ENCODE measurements at regions of chr5 and their contacts with region 1.

Region 1: GRCh38 chr5:53069626-53070025 is 39.9 kb downstream of the MOCS2 start:
- DNase-seq: peak; percentile 85
- ATAC-seq: peak; percentile 97
- H3K4me3 Mint-ChIP-seq: no peak overlapping the region
- H3K27ac Mint-ChIP-seq: peak overlapping the region; percentile 24
- H3K4me1 Mint-ChIP-seq: peaks cover 18% of the 10 kb centered on the region
- H3K27me3 Mint-ChIP-seq: peaks cover 12% of the 10 kb centered on the region

Region 2: GRCh38 chr5:53008751-53009150 is 60.9 kb before region 1 on chr5:
- CTCF ChIA-PET with region 1: no interaction called
- POLR2A ChIA-PET with region 1: no interaction called
- intact Hi-C with region 1: loop called (anchors 1 kb)
- DNase-seq: peak; percentile 65
- ATAC-seq: peak; percentile 92
- H3K4me3 Mint-ChIP-seq: no peak overlapping the region
- H3K27ac Mint-ChIP-seq: peak overlapping the region; percentile 39
- H3K4me1 Mint-ChIP-seq: peaks cover 53% of the 10 kb centered on the region
- H3K27me3 Mint-ChIP-seq: peaks cover 10% of the 10 kb centered on the region

Region 3: DNA sequence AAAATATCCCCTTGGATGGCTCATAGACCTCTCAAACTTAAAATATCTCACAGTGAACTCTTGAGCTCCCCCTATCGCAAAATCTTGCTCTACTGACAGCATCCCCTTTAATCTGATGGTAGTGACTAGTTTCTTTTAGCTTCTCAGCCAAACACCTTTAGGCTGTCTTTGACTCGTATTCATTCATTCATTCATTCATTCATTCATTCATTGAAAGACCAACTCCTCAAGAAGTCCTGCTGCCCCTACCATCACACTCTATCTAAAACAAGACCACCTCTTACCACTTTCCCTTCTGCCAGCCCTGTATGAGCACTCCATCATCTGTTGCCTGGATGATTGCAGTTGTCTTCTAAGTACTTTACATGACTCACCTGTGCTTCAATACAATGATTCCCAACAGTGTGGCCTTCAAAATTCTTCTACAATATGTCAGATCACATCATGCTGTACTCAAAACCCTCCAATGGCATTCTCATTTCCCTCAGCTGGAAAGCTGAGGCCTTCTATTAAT is 33.7 kb before region 1 on chr5:
- CTCF ChIA-PET with region 1: interaction called, 11 read pairs
- POLR2A ChIA-PET with region 1: no interaction called
- intact Hi-C with region 1: loop called (anchors 1 kb)
- DNase-seq: peak; percentile 20
- ATAC-seq: no peak
- H3K4me3 Mint-ChIP-seq: no peak overlapping the region
- H3K27ac Mint-ChIP-seq: no peak overlapping the region
- H3K4me1 Mint-ChIP-seq: peaks cover 33% of the 10 kb centered on the region
- H3K27me3 Mint-ChIP-seq: peaks cover 6% of the 10 kb centered on the region

Region 4: GRCh38 chr5:53041071-53041692 is 28.4 kb before region 1 on chr5:
- CTCF ChIA-PET with region 1: interaction called, 3 read pairs
- POLR2A ChIA-PET with region 1: no interaction called
- intact Hi-C with region 1: loop called (anchors 1 kb)
- DNase-seq: peak; percentile 43
- ATAC-seq: peak; percentile 93
- H3K4me3 Mint-ChIP-seq: no peak overlapping the region
- H3K27ac Mint-ChIP-seq: peak overlapping the region; percentile 48
- H3K4me1 Mint-ChIP-seq: peaks cover 37% of the 10 kb centered on the region
- H3K27me3 Mint-ChIP-seq: peaks cover 16% of the 10 kb centered on the region

Region 5: GRCh38 chr5:53055359-53055758 is 14.3 kb before region 1 on chr5:
- CTCF ChIA-PET with region 1: interaction called, 12 read pairs
- POLR2A ChIA-PET with region 1: no interaction called
- intact Hi-C with region 1: no loop called
- DNase-seq: no peak
- ATAC-seq: no peak
- H3K4me3 Mint-ChIP-seq: no peak overlapping the region
- H3K27ac Mint-ChIP-seq: no peak overlapping the region
- H3K4me1 Mint-ChIP-seq: no peaks in the 10 kb centered on the region
- H3K27me3 Mint-ChIP-seq: peaks cover 17% of the 10 kb centered on the region

Region 6: DNA sequence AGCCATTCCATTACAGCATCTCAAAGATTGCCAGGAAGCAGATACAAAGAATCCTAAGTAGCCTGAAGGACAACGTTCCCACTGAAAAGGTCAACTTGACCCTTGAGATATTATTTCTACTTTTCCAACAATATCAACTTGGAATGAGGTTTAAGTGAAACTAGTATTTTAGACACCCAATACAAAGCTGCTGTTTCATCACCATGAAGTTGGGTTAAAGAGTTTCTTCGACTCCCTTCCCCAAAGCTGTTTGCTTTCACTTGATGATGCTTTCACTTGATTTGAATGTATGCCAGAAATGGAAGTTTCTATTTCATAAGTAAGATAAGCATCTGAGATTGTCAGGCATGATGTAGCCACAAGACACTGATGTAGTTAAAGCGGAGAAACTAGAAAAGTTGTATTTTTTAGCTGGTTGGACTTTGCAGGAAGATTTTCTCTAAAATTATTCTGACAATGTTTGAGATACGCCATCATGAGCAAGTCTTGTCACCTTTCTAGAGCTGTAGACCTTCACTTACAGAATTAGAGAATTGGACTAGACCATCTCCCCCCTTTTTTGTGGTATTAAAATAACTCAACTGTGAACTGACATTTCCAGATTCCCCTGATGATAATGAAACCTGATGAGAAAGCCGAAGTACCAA is 19.8 kb after region 1 on chr5:
- CTCF ChIA-PET with region 1: interaction called, 33 read pairs
- POLR2A ChIA-PET with region 1: interaction called, 3 read pairs
- intact Hi-C with region 1: loop called (anchors 1 kb)
- DNase-seq: no peak
- ATAC-seq: peak; percentile 86
- H3K4me3 Mint-ChIP-seq: peak overlapping the region; percentile 60
- H3K27ac Mint-ChIP-seq: peak overlapping the region; percentile 83
- H3K4me1 Mint-ChIP-seq: peaks cover 30% of the 10 kb centered on the region
- H3K27me3 Mint-ChIP-seq: peaks cover 2% of the 10 kb centered on the region

Region 7: DNA sequence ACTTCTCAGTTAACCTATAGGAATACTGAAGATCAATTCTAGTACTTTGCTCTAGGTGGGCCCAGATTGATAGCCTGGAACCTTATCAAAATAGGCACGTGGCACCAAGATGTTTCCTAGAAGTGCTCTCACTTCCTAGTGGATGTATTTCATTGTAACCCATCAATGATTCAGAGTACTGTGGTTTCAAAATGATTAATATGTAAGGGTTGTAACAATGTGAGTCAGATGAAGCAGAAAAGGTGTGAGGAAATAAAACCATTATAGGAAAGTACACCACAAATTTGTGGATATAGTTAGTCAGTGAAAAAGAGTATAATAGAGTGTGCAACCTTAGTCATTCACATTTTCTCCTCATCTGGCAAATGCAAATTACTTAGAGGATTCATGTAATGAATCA is 233.5 kb after region 1 on chr5:
- CTCF ChIA-PET with region 1: no interaction called
- POLR2A ChIA-PET with region 1: no interaction called
- intact Hi-C with region 1: loop called in 1 of 2 experiments (anchors 1 kb)
- DNase-seq: peak; percentile 14
- ATAC-seq: peak; percentile 93
- H3K4me3 Mint-ChIP-seq: no peak overlapping the region
- H3K27ac Mint-ChIP-seq: peak overlapping the region; percentile 33
- H3K4me1 Mint-ChIP-seq: peaks cover 20% of the 10 kb centered on the region
- H3K27me3 Mint-ChIP-seq: peaks cover 12% of the 10 kb centered on the region